Heart left ventricle (tissue), 16 donors: ENCODE measurements at regions of chr18 and their contacts with region 1.

Region 1: GRCh38 chr18:31741097-31741735 is 19.5 kb downstream of the SLC25A52 start:
- DNase-seq: no peak
- ATAC-seq: no peak
- H3K4me3 ChIP-seq: no peak overlapping the region
- H3K27ac ChIP-seq: no peak overlapping the region
- H3K4me1 ChIP-seq: peaks cover 0 to 7% (median 0%) of the 10 kb centered on the region in 12 donors
- H3K27me3 ChIP-seq: no peaks in the 10 kb centered on the region
- CTCF ChIP-seq: peak; percentile 82 to 95 (median 91)
- POLR2A ChIP-seq: no peak

Region 2: DNA sequence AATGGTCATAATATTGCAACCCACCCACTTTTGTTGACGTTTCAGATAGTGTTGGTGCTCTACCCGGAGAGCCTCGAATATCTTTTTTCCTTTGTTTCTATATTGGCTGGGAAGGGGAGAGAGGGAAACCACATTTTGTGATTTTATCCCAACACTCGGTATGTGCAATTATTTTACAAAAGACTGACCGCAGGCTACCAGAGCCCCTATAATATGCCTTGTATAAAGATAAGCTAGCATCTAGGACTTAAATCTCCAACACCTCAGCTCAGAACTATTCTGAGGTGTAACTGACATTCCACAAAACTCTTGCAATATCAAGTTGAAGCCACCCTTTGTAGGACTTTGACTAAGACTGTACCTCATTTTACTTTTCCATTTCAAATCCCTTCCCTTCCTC is 1208.8 kb before region 1 on chr18:
- intact Hi-C with region 1: no loop called
- DNase-seq: no peak
- ATAC-seq: no peak
- H3K4me3 ChIP-seq: no peak overlapping the region
- H3K27ac ChIP-seq: no peak overlapping the region
- H3K4me1 ChIP-seq: no peaks in the 10 kb centered on the region
- H3K27me3 ChIP-seq: no peaks in the 10 kb centered on the region
- CTCF ChIP-seq: no peak
- POLR2A ChIP-seq: no peak

Region 3: DNA sequence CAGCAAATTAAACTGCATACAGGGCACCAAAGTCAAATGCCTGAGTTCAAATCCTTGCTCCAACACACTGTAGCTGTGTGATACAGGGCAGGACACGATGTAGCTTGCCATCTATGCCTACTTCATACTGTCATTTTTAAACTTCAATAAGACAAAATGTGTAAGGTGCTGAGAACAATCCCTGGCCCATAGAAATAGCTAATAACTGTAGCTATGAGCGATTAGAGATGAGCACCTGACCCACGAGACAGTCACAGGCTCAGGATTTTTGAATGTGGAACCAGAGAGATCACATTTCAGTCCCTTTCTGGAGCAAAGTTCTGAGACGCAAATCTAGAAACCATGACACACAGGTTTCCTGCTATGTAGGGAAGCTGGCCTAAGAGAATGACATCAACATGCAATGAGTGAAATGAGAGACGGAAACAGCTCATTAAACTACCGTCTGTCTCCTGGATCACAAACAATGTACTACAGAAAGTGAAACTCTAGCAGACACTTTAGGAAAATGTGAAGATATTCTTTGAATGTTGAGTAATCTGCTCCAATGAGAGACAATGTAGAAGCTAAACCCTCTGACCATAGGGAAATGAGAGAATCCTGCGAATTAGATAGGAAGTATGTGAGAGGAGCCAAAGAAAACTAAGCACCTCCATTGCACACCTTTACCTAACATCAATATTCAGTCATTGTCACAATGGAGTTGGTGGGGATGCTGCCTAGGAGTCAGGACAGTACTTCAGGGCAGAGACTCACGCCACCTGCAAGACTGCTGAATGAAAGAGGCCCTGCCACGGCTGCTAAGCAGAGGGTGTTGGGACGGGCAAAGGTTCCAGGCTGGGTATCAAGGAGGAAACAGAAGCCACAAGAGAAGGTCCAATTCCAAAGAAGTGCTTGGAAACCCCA is 82.3 kb before region 1 on chr18:
- intact Hi-C with region 1: no loop called
- DNase-seq: no peak
- ATAC-seq: peak in 1 of 4 donors; percentile 74
- H3K4me3 ChIP-seq: no peak overlapping the region
- H3K27ac ChIP-seq: peak overlapping the region in 1 of 12 donors; percentile 3
- H3K4me1 ChIP-seq: peaks cover 0 to 14% (median 0%) of the 10 kb centered on the region in 12 donors
- H3K27me3 ChIP-seq: no peaks in the 10 kb centered on the region
- CTCF ChIP-seq: no peak
- POLR2A ChIP-seq: no peak

Region 4: DNA sequence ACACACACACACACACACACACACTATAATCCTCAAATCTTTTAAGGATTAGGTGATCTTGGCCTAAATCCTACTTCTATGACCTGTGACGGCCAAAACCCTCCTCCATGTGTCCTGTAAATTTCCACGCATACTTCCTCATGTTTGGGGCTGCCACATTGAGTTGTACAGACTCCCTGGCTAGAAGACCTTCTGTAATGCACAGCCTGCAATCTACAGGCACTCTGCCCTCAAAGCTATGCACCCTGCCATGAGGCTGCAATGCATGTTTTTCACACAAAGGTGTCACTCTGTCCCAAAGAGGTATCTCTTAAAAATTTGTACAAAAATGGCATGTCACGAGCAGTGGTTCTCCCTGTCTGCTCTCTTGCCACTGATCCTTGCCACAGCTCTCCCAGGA is 30.4 kb before region 1 on chr18:
- intact Hi-C with region 1: no loop called
- DNase-seq: no peak
- ATAC-seq: no peak
- H3K4me3 ChIP-seq: no peak overlapping the region
- H3K27ac ChIP-seq: no peak overlapping the region
- H3K4me1 ChIP-seq: no peaks in the 10 kb centered on the region
- H3K27me3 ChIP-seq: no peaks in the 10 kb centered on the region
- CTCF ChIP-seq: no peak
- POLR2A ChIP-seq: no peak

Region 5: DNA sequence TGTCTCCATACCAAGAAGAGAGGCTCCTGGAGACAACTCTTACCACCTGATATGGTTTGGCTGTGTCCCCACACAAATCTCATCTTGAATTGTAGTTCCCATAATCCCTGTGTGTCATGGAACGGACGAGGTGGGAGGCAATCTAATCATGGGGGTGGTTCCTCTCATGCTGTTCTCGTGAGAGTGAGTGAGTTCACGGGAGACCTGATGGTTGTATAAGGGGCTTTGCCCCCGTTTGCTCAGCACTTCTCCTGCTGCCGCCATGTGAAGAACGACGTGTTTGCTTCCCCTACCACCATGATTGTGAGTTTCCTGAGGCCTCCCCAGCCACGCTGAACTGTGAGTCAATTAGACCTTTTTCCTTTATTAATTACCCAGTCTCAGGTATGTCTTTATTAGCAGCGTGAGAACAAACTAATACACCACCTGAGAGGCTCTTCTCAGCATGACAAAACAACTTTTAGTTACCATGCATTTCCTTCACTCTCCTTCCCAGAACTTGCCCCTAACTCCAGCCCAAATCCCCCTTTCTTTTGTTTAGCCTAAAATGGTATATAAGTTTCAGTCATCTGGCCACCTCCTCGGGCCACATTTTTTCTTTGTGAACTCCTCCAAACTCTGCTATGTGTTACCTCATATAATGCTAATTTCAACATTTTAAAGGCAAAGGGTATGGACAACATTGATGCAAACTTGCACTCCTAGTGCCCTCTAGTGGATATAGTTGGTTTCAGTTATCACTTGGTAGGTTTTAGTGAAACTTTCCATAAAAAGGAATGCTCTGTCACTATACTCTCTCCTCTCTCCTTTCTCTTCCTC is 78.1 kb after region 1 on chr18:
- intact Hi-C with region 1: loop called in 8 of 10 experiments (anchors 2 to 5 kb)
- DNase-seq: no peak
- ATAC-seq: peak in 1 of 4 donors; percentile 56
- H3K4me3 ChIP-seq: no peak overlapping the region
- H3K27ac ChIP-seq: no peak overlapping the region
- H3K4me1 ChIP-seq: peaks cover 0 to 6% (median 0%) of the 10 kb centered on the region in 12 donors
- H3K27me3 ChIP-seq: no peaks in the 10 kb centered on the region
- CTCF ChIP-seq: peak; percentile 53 to 79 (median 70)
- POLR2A ChIP-seq: no peak

Region 6: GRCh38 chr18:31954349-31954748 is 213.1 kb after region 1 on chr18:
- intact Hi-C with region 1: loop called in 1 of 10 experiments (anchors 10 kb)
- DNase-seq: no peak
- ATAC-seq: no peak
- H3K4me3 ChIP-seq: no peak overlapping the region
- H3K27ac ChIP-seq: no peak overlapping the region
- H3K4me1 ChIP-seq: no peaks in the 10 kb centered on the region
- H3K27me3 ChIP-seq: no peaks in the 10 kb centered on the region
- CTCF ChIP-seq: no peak
- POLR2A ChIP-seq: no peak

Region 7: DNA sequence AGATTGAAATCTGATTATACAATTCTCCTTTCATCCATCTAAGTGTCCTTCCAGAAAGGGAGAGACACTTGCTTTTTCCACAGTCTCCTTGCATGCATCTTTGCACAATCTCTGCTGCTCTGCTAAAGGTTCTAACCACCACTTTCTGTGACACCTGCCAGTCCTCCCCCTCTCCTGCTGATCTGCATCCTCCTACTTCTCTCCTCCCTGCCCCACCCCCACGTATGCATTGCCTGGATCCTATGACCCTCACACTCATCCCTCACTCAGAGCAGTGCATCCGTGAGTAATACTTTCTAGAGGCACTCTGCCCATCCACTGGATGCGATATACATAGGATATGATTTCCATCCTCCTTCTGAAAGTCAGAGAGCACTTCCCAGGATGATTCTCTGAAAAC is 229.4 kb after region 1 on chr18:
- intact Hi-C with region 1: loop called in 7 of 10 experiments (anchors 5 kb)
- DNase-seq: no peak
- ATAC-seq: no peak
- H3K4me3 ChIP-seq: no peak overlapping the region
- H3K27ac ChIP-seq: no peak overlapping the region
- H3K4me1 ChIP-seq: no peaks in the 10 kb centered on the region
- H3K27me3 ChIP-seq: no peaks in the 10 kb centered on the region
- CTCF ChIP-seq: no peak
- POLR2A ChIP-seq: no peak